A549 (cell line): ENCODE measurements at regions of chr12 and their contacts with region 1.

Region 1: GRCh38 chr12:66092559-66093269 is 37.8 kb downstream of the LLPH start:
- DNase-seq: peak in 1 of 2 experiments; percentile 12
- ATAC-seq: no peak; a peak in 1 of 6 replicates
- H3K4me3 ChIP-seq: no peak overlapping the region
- H3K27ac ChIP-seq: no peak overlapping the region
- H3K4me1 ChIP-seq: 0 out of 3 replicates have a peak, but pooled peaks cover 3% of the 10 kb centered on the region
- CTCF ChIP-seq: no peak
- EP300 ChIP-seq: no peak
- POLR2A ChIP-seq: no peak
- RAD21 ChIP-seq: no peak

Region 2: DNA sequence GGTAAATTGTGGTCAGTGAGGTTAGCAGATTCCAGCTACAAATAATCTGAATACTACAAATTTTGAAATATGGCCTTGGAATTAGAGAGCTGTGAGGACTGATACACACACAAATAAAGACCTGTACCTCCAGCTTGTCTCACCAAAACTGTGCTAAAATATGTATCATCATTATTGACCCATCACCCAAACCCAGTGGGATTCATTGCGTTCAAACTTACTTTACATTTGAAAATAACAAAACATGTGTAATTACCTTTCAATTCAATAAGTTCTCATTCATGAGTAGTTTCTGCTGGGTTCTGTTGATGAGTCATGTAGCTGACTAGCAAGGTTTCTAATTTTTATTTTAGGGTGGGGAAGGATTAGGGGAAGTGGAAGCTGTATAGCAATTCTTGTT is 643.3 kb before region 1 on chr12:
- CTCF ChIA-PET with region 1: no interaction called
- POLR2A ChIA-PET with region 1: no interaction called
- DNase-seq: no peak
- ATAC-seq: no peak
- H3K4me3 ChIP-seq: no peak overlapping the region
- H3K27ac ChIP-seq: no peak overlapping the region
- H3K4me1 ChIP-seq: peaks cover 22% of the 10 kb centered on the region
- CTCF ChIP-seq: no peak
- EP300 ChIP-seq: no peak
- POLR2A ChIP-seq: no peak
- RAD21 ChIP-seq: no peak

Region 3: DNA sequence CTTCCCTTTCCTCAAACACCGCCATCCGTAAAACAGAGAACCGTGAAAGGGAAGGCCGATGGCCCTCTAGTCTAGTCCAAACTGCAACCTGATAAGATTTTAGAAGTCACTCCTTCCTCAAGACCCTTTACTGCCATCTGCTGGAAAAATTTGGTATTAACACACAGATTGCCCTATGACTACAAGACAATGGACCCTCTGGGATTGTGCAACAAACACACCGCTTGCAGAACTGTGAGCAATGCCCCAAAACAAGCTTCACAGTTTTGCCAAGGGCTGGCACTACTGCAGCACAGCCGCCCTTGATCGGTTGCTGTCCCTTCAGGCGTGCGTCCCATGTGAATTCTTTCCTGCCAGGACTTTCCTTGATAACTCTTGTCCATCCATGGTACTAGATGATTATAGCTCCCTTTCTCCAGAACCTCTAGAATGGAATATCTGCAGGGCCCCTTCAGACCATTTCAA is 14.8 kb after region 1 on chr12:
- CTCF ChIA-PET with region 1: interaction called, 12 read pairs
- POLR2A ChIA-PET with region 1: no interaction called
- DNase-seq: peak; percentile 69 to 92
- ATAC-seq: peak; percentile 91 to 97
- H3K4me3 ChIP-seq: no peak overlapping the region
- H3K27ac ChIP-seq: 0 out of 6 replicates have a peak overlapping the region, but pooled peaks of 1 of the 2 experiments have one; percentile 16
- H3K4me1 ChIP-seq: no peaks in the 10 kb centered on the region
- CTCF ChIP-seq: peak; percentile 75
- EP300 ChIP-seq: no peak
- POLR2A ChIP-seq: no peak
- RAD21 ChIP-seq: peak; percentile 77 to 82

Region 4: DNA sequence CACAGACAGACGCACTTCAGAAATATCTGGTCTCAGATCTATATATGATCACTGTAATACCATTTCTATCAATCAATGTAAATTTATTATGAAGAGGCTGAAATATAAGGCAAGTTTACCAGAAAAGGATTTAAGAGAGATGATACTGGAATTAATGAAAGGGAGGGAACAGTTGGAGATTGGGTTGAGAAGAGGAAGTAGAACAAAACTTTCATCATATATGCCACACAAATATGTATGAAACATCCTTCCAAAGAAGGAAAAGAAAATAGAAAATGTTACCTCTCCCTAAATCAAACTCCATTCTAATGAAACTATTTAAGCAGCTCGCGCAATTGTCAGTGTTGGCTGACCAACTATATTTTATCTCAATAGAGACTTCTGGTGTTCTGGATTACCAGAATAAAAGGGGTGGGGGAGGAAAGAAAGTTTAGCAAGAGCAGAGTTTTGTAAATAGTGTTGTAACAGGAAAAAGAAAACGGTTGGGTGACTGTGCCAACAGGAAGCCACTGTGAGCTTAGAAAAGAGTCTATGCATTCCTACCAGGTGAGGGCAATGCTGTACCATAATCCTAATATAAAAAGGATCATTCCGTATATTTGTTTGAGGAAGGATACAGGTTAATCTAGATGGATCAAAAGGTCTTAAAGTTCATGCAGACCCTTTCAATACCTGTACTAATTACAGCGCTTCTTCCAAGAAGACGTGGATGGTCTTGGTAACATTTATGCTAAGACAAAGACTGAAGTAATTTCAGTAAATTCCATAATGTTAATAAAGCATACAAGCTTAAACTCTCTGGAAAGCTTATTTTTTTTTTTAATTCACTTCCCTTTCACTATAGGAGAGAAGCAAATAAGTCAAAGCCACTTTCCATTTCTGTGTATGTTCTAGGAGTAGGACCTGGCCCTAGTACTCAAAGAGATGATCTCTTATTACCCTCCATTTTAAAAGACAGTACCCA is 52.4 kb after region 1 on chr12:
- CTCF ChIA-PET with region 1: no interaction called
- POLR2A ChIA-PET with region 1: no interaction called
- DNase-seq: peak; percentile 37 to 78
- ATAC-seq: peak; percentile 68 to 89
- H3K4me3 ChIP-seq: no peak overlapping the region
- H3K27ac ChIP-seq: peak overlapping the region in 1 of 2 experiments; percentile 37; a peak in 1 of 6 replicates
- H3K4me1 ChIP-seq: no peaks in the 10 kb centered on the region; the same call in 2 of the 3 replicates
- CTCF ChIP-seq: peak; percentile 66
- EP300 ChIP-seq: no peak
- POLR2A ChIP-seq: no peak
- RAD21 ChIP-seq: peak; percentile 64 to 73